ENCODE measurements at regions of chrX and their contacts with region 1.

Region 1: GRCh38 chrX:154534862-154535670 is 11.6 kb downstream of the G6PD start:
- DNase-seq: peak; percentile 92
- H3K4me3 ChIP-seq: no peak overlapping the region
- H3K27ac ChIP-seq: peak overlapping the region; percentile 26 to 65 (median 55)
- H3K4me1 ChIP-seq: peaks cover 0 to 5% (median 3%) of the 10 kb centered on the region in 4 donors
- H3K27me3 ChIP-seq: no peaks in the 10 kb centered on the region
- CTCF ChIP-seq: peak; percentile 85 to 98 (median 95)
- EP300 ChIP-seq: no peak
- POLR2A ChIP-seq: no peak

Region 2: DNA sequence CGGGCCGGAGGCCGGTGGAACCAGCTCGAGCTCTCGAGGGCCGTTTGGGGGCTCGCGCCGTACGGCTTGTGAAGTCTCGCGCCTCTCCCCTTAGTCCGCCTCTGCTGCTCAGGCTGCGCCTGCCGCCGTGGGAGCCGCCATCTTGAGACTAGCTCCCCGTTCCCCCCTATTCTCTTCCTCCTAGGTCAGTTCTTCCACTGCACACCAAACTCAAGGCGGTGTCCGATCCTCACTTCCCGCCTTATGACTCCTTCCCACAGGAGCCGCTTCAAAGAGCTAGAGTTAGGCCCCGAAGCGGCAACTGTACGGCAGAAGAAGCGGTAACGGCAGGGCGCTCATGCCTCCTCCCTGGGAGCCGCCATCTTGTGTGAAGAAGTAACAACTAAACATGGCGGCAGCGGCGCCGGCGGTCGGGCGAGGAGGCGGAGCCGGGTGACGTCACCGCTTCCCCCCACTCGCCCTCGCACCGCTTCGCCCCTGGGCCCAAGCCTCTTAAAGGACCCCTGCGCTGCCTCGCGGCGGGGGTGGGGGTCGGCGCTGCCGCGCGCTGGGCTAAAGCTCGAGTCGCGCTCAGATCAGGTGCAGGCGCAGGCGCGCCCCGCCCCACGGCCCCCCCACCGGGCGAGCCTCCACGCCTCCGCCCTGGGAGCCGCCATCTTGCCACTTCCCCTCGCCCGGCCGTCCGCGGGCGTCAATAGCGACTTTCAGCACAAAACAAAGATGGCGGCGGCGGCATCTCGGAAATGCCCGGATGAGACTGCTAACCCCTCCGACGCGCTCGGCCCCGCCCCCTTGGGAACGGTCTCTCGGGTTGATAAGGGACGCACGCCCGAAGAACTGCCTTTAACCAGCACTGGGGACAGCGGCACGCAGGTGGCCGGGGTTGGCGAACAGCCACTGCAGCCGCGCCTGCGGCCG is 563.4 kb before region 1 on chrX and contains the start of gene HCFC1:
- in situ Hi-C with region 1: loop called in 1 of 4 experiments (anchors 25 kb)
- intact Hi-C with region 1: no loop called
- DNase-seq: peak; percentile 95
- H3K4me3 ChIP-seq: peak within 1 kb of the TSS; percentile 63 to 91 (median 86)
- H3K27ac ChIP-seq: peak within 1 kb of the TSS; percentile 94 to 100 (median 98)
- H3K4me1 ChIP-seq: peaks cover 0 to 48% (median 46%) of the 10 kb centered on the region in 4 donors
- H3K27me3 ChIP-seq: no peaks in the 10 kb centered on the region
- CTCF ChIP-seq: no peak
- EP300 ChIP-seq: no peak
- POLR2A ChIP-seq: no peak
- total RNA-seq, gene HCFC1: 34.0 to 68.5 (median 49.8) TPM

Region 3: DNA sequence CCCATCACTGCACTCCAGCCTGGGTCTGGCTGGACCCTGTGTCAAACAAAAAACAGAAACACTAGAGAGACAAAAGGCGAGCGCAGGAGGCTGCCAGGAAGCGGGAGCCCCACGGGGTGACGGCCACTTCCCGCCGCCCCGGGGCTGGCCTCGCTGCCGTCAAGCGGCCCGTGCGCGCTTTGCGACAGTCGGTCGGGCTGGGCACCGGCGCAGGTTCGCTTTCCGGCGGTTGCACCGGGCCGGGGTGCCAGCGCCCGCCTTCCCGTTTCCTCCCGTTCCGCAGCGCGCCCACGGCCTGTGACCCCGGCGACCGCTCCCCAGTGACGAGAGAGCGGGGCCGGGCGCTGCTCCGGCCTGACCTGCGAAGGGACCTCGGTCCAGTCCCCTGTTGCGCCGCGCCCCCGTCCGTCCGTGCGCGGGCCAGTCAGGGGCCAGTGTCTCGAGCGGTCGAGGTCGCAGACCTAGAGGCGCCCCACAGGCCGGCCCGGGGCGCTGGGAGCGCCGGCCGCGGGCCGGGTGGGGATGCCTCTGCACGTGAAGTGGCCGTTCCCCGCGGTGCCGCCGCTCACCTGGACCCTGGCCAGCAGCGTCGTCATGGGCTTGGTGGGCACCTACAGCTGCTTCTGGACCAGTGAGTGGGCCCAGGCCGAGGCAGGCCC is 123.6 kb before region 1 on chrX and contains the start of gene TAFAZZIN:
- in situ Hi-C with region 1: loop called in 3 of 4 experiments (anchors 25 kb)
- intact Hi-C with region 1: no loop called
- DNase-seq: peak; percentile 84
- H3K4me3 ChIP-seq: peak within 1 kb of the TSS; percentile 61 to 95 (median 77)
- H3K27ac ChIP-seq: peak within 1 kb of the TSS; percentile 91 to 98 (median 96)
- H3K4me1 ChIP-seq: peaks cover 0 to 23% (median 8%) of the 10 kb centered on the region in 4 donors
- H3K27me3 ChIP-seq: no peaks in the 10 kb centered on the region
- CTCF ChIP-seq: no peak
- EP300 ChIP-seq: no peak
- POLR2A ChIP-seq: peak; percentile 67
- total RNA-seq, gene TAFAZZIN: 46.7 to 495 (median 101) TPM

Region 4: GRCh38 chrX:154775419-154776349 is 240.6 kb after region 1 on chrX:
- in situ Hi-C with region 1: no loop called
- intact Hi-C with region 1: no loop called
- DNase-seq: no peak
- H3K4me3 ChIP-seq: no peak overlapping the region
- H3K27ac ChIP-seq: no peak overlapping the region
- H3K4me1 ChIP-seq: no peaks in the 10 kb centered on the region
- H3K27me3 ChIP-seq: no peaks in the 10 kb centered on the region
- CTCF ChIP-seq: no peak
- EP300 ChIP-seq: no peak
- POLR2A ChIP-seq: no peak

Region 5: DNA sequence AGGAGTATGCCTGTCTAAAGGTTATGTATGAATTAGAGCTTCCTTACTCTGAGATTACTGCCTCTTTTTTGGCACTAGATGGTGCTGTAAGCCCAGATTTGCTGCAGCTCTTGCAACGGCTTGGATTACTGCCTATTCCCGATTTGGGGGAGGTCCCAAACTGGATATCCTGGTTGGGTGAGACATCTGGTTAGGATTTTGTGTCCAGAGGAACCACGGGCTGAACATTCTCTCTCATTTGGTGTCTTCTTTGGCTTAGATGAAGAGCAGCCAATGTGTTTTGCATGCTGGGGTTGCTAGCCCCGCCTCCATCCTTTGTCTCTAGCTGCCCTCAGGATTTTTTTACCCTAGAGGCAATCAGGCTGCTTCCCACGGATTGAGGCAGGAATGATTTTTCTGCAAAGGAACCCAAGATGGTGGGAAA is 383.0 kb after region 1 on chrX:
- in situ Hi-C with region 1: no loop called
- intact Hi-C with region 1: no loop called
- DNase-seq: peak; percentile 34
- H3K4me3 ChIP-seq: peak overlapping the region in 1 of 4 donors; percentile 28
- H3K27ac ChIP-seq: no peak overlapping the region
- H3K4me1 ChIP-seq: no peaks in the 10 kb centered on the region
- H3K27me3 ChIP-seq: no peaks in the 10 kb centered on the region
- CTCF ChIP-seq: peak; percentile 43 to 60 (median 49)
- EP300 ChIP-seq: no peak
- POLR2A ChIP-seq: no peak